ENCODE measurements at regions of chr3 and their contacts with region 1.

Region 1: DNA sequence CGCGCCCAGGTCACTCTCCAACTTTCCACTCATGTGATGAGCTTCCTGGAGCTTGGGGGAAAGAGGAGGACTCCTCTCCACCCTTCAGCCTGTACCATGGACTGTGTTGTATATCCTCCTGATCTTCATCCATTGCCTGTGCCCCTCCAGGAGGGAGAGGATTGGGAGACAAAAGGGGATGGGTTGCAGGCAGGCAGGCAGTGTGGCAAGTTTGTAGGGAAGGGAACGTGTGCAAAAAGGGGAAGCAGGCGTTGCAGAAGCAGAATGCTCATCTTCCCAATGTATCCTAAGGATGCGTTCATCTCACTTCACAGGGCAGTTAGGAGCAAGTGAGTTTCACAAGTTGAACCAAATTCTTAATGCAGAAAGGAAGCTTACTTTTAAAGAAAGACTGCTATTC is 28.1 kb upstream of the GHSR start:
- DNase-seq: peak; percentile 12
- H3K4me3 ChIP-seq: peak overlapping the region in 1 of 3 experiments; percentile 38
- H3K27ac ChIP-seq: peak overlapping the region; percentile 78
- H3K4me1 ChIP-seq: peaks cover 14% of the 10 kb centered on the region
- H3K27me3 ChIP-seq: no peaks in the 10 kb centered on the region
- CTCF ChIP-seq: no peak
- POLR2A ChIP-seq: no peak

Region 2: DNA sequence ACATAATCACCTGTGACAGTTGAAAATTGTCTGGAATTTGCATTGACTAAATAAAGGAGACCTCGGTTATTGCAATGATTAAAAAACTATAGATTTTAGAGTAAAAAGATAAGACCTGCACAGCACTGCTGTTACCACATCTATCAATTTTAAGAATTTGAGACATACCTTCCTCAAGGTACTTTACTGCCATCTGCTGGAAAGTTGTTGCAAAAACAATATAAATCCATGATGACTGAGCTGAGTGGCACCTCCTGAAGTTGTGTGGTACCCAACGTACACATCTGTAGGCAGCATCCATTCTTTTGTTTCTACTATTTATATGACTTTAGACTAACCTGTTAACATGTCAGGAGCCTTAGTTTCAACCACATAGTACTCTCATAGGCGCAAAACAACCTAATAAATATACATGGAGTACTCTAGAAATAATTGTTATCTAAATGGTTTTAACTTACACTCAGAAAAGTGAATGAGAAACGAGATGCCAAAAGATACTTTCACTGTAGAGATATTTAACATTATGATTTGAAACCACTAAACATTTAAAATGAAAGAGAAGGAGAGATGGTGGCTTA is 134.8 kb before region 1 on chr3:
- CTCF ChIA-PET with region 1: interaction called, 16 read pairs
- POLR2A ChIA-PET with region 1: no interaction called
- dilution Hi-C with region 1: no loop called
- intact Hi-C with region 1: no loop called
- DNase-seq: peak; percentile 63
- H3K4me3 ChIP-seq: no peak overlapping the region
- H3K27ac ChIP-seq: no peak overlapping the region
- H3K4me1 ChIP-seq: no peaks in the 10 kb centered on the region
- H3K27me3 ChIP-seq: no peaks in the 10 kb centered on the region
- CTCF ChIP-seq: peak; percentile 28 to 34
- POLR2A ChIP-seq: no peak

Region 3: GRCh38 chr3:172355839-172356238 is 120.5 kb before region 1 on chr3:
- CTCF ChIA-PET with region 1: interaction called, 12 read pairs
- POLR2A ChIA-PET with region 1: no interaction called
- dilution Hi-C with region 1: no loop called
- intact Hi-C with region 1: no loop called
- DNase-seq: peak; percentile 93
- H3K4me3 ChIP-seq: no peak overlapping the region
- H3K27ac ChIP-seq: no peak overlapping the region
- H3K4me1 ChIP-seq: peaks cover 16% of the 10 kb centered on the region
- H3K27me3 ChIP-seq: no peaks in the 10 kb centered on the region
- CTCF ChIP-seq: no peak
- POLR2A ChIP-seq: no peak

Region 4: DNA sequence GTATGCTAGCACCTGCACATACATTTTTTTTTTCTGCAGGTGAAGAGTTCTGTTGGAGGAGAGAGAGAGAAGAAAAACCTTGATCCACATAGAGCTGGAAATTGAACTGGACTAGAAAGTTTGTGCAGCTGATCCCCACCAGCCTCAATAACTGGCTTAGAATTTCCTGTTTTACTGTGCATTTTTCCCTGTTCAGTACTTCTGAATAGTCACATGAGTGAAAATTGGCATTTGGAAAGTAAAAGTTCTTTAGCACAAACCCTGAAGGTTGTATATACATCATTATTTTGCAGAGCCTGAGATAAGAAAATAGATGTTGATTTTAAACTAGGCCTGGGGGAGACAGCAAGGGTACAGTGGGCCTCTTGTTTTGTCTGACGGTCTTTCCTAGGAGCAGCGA is 70.4 kb before region 1 on chr3:
- CTCF ChIA-PET with region 1: interaction called, 4 read pairs
- POLR2A ChIA-PET with region 1: no interaction called
- dilution Hi-C with region 1: no loop called
- intact Hi-C with region 1: loop called (anchors 5 kb)
- DNase-seq: no peak
- H3K4me3 ChIP-seq: no peak overlapping the region
- H3K27ac ChIP-seq: no peak overlapping the region
- H3K4me1 ChIP-seq: no peaks in the 10 kb centered on the region
- H3K27me3 ChIP-seq: no peaks in the 10 kb centered on the region
- CTCF ChIP-seq: no peak
- POLR2A ChIP-seq: no peak

Region 5: GRCh38 chr3:172461530-172462138 is 14.7 kb before region 1 on chr3:
- CTCF ChIA-PET with region 1: interaction called, 47 read pairs
- POLR2A ChIA-PET with region 1: interaction called, 5 read pairs
- dilution Hi-C with region 1: no loop called
- intact Hi-C with region 1: loop called (anchors 2 kb)
- DNase-seq: no peak
- H3K4me3 ChIP-seq: no peak overlapping the region
- H3K27ac ChIP-seq: no peak overlapping the region
- H3K4me1 ChIP-seq: peaks cover 7% of the 10 kb centered on the region
- H3K27me3 ChIP-seq: peaks cover 0 to 2% of the 10 kb centered on the region in 2 experiments
- CTCF ChIP-seq: peak; percentile 72 to 77
- POLR2A ChIP-seq: no peak

Region 6: DNA sequence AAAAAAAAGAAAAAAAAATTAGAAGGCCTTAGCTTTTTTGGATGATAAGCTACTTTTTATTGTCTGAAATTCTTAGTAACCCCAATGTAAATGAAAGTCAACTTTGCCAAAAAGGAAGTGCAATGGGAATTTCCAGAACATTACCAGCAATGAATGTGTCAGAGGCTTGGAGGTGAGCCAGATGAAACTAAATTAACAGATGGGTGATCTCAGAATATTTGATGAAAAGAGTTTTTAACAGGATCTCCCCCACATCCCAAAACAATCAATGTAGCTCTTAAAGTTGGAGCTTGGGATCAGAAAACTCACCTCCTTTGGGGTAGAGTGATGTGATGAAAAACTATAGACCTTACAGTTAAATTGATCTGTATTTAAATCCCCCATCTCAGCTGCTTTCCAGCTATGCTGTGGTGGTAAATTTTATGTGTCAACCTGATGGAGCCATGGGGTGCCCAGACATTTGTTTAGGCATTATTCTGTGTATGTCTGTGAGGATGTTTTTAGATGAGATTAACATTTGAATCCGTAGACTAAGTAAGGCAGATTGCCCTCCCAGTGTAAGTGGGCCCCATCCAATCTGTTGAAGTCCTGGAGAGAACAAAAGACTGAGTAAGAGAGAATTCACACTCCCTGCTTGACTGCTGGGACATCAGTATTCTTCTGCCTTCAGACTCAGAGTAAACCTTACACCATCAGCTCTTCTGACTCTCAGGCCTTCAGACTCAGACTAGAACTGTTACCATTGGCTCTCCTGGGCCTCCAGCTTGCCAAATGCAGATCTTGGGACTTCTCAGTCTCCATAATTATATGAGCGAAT is 131.2 kb after region 1 on chr3:
- CTCF ChIA-PET with region 1: interaction called, 11 read pairs
- POLR2A ChIA-PET with region 1: interaction called, 6 read pairs
- dilution Hi-C with region 1: no loop called
- intact Hi-C with region 1: no loop called
- DNase-seq: peak; percentile 94
- H3K4me3 ChIP-seq: no peak overlapping the region
- H3K27ac ChIP-seq: peak overlapping the region; percentile 90
- H3K4me1 ChIP-seq: peaks cover 27% of the 10 kb centered on the region
- H3K27me3 ChIP-seq: no peaks in the 10 kb centered on the region
- CTCF ChIP-seq: no peak
- POLR2A ChIP-seq: no peak

Measured in endothelial cell of umbilical vein (primary cell).